Heart right ventricle (tissue), 16 donors: ENCODE measurements at regions of chr10 and their contacts with region 1.

Region 1: DNA sequence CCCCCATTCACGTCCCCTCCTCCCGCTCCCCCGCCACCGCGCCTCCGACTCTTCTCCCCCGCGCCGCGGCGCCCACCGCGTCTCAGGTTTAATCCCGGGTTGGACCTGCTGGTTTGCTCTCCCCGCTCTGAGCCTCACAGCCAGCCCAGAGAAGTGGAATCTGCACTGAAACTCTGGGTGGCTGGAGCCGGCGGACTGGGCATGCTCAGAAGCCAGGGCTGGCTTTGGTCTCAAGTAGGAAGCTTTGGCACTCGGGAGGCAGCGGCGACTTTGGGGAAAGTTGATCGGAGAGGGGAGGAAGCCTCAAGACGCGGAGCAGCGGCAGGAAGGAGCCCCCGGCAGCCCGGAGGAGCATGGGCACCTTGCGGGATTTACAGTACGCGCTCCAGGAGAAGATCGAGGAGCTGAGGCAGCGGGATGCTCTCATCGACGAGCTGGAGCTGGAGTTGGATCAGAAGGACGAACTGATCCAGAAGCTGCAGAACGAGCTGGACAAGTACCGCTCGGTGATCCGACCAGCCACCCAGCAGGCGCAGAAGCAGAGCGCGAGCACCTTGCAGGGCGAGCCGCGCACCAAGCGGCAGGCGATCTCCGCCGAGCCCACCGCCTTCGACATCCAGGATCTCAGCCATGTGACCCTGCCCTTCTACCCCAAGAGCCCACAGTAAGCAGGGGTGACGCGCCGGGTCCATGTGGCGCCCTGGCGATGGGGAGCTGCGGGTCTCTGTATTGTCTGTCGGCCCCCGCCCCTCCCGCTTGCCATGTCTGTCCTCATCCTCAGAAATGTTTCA is at the start of gene PRKG1:
- DNase-seq: peak; percentile 70 to 80
- ATAC-seq: peak; percentile 86 to 95 (median 90)
- H3K4me3 ChIP-seq: peak within 1 kb of the TSS; percentile 57 to 82 (median 66)
- H3K27ac ChIP-seq: peak within 1 kb of the TSS; percentile 73 to 90 (median 84)
- H3K4me1 ChIP-seq: peaks cover 0 to 35% (median 11%) of the 10 kb centered on the region in 9 donors
- H3K27me3 ChIP-seq: peaks cover 0 to 42% (median 0%) of the 10 kb centered on the region in 7 donors
- CTCF ChIP-seq: no peak
- total RNA-seq, gene PRKG1: 25.2 to 48.1 (median 32.1) TPM

Region 2: DNA sequence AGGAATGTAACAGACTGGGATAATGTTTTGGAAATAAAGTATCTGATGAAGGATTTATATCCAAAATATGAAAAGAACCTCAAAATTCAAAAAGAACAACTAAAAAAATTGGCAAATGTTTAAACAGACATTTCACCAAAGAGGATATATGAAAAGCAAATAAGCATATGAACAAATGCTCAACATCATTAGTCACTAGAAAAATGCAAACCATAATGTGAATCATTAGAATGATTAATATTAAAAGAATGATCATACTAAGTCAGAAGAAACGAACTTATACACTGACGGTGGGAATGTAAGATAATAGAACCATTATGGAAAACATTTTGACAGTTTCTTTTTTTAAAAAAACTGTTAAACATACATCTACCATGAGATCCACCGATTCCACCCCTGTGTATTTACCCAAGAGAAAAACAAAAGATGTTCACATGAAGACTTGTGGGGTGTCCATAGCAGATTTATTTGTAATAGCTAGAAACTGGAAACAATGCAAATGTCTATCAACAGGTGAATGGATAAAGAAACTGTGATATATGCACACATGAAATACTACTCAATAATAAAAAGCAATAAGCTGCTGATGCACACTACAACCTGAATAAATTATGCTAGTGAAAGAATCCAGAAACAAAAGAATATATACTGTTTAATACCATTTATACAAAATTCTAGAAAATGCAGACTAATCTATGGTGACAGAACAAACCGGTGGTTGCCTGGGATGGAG is 35.5 kb after region 1 on chr10:
- intact Hi-C with region 1: no loop called
- DNase-seq: no peak
- ATAC-seq: no peak
- H3K4me3 ChIP-seq: no peak overlapping the region
- H3K27ac ChIP-seq: no peak overlapping the region
- H3K4me1 ChIP-seq: peaks cover 0 to 29% (median 5%) of the 10 kb centered on the region in 9 donors
- H3K27me3 ChIP-seq: no peaks in the 10 kb centered on the region
- CTCF ChIP-seq: no peak

Region 3: DNA sequence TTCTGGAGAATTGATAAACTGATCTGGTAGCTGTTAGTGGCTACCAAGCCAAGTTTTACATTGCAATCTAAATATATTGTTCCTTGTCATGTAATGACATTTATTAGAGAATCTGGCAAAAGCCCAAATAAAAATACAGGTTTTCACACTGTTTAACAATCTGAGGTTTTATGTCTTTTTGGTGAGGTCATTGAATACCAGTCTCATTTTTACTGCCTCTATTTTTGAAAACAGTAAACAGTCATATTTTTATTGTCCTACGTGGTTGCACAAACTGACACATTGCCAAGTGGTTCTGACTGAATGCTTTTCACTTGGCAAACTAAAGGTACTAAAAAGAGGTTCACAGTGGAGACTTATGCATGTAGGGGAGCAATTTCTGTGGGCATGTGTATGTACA is 157.3 kb after region 1 on chr10:
- intact Hi-C with region 1: loop called in 1 of 10 experiments (anchors 10 kb)
- DNase-seq: no peak
- ATAC-seq: peak in 1 of 8 donors; percentile 35
- H3K4me3 ChIP-seq: no peak overlapping the region
- H3K27ac ChIP-seq: peak overlapping the region in 8 of 10 donors; percentile 2 to 68 (median 42)
- H3K4me1 ChIP-seq: peaks cover 0 to 64% (median 21%) of the 10 kb centered on the region in 9 donors
- H3K27me3 ChIP-seq: no peaks in the 10 kb centered on the region
- CTCF ChIP-seq: no peak

Region 4: DNA sequence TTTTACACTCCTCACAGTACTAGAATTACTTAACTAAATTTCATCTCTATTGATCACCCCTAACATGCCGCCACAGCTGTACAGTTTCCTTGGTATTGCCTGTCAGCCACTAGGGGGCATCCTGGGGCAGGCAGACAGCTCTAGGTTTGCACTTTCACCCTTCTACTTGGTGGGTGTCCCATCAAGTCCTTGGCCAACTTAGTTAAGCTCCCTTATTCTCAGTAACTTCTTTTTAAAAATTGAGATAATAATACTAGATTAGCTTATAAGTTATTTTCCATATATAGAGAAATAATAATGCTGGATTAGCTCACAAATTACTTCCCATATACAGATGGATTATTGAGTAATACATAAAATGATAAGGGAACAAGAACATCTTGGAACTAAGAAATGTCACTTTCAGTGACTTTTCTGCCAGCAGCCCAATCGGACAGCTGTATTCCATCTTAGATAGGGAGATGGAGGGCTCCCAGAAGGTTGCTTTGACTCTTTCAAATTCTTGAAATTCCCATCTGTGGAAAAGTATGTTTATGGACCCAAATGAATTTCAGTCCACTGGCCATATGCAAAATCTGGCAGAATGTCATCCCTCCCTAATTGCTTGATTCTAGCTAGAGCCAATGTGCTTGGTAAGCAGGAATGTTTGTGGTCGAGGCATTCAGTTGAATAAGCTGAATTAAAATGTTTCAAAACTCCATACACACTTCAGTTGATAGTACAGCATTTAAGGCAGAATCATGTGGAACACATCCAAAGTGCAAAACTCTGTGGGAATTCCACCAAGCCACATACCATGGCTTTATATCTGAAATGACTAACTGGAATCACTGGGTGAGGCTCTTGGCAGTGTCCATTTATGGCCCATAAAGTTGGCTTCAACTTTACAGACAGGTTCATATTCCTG is 315.2 kb after region 1 on chr10:
- intact Hi-C with region 1: loop called in 1 of 10 experiments (anchors 10 kb)
- DNase-seq: peak; percentile 16 to 18
- ATAC-seq: peak; percentile 38 to 78 (median 72)
- H3K4me3 ChIP-seq: no peak overlapping the region
- H3K27ac ChIP-seq: peak overlapping the region in 3 of 10 donors; percentile 2 to 33 (median 10)
- H3K4me1 ChIP-seq: peaks cover 0 to 26% (median 14%) of the 10 kb centered on the region in 9 donors
- H3K27me3 ChIP-seq: no peaks in the 10 kb centered on the region
- CTCF ChIP-seq: peak; percentile 46 to 86 (median 78)

Region 5: DNA sequence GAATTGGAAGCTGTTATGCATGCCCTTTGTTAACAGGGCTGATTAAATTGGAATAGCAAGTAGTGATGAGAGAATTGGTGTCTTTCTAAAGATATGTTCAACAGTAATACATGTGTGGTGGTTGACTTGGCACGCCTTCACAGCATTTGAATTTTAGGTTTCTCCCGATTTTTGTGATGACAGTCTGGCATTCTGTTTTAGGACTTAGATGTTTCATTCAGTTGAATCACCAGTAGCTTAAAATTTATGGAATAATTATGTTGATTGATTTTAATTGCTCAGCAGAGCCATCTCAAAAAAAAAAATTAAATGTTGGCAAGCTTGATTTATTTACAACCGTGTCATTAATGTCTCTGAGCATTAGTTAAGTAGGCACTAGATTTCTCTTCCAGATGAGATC is 405.3 kb after region 1 on chr10:
- intact Hi-C with region 1: no loop called
- DNase-seq: no peak
- ATAC-seq: no peak
- H3K4me3 ChIP-seq: no peak overlapping the region
- H3K27ac ChIP-seq: no peak overlapping the region
- H3K4me1 ChIP-seq: no peaks in the 10 kb centered on the region
- H3K27me3 ChIP-seq: no peaks in the 10 kb centered on the region
- CTCF ChIP-seq: no peak

Region 6: GRCh38 chr10:51699475-51700227 is 625.2 kb after region 1 on chr10 and contains the start of gene CSTF2T:
- intact Hi-C with region 1: loop called in 3 of 10 experiments (anchors 10 kb)
- DNase-seq: peak; percentile 79 to 94
- ATAC-seq: peak; percentile 96 to 99 (median 97)
- H3K4me3 ChIP-seq: peak within 1 kb of the TSS; percentile 62 to 84 (median 72)
- H3K27ac ChIP-seq: peak within 1 kb of the TSS; percentile 88 to 99 (median 94)
- H3K4me1 ChIP-seq: peaks cover 2 to 53% (median 43%) of the 10 kb centered on the region in 9 donors
- H3K27me3 ChIP-seq: no peaks in the 10 kb centered on the region
- CTCF ChIP-seq: no peak
- total RNA-seq, gene CSTF2T: 20.6 to 31.6 (median 23.1) TPM